ENCODE measurements at regions of chr9 and their contacts with region 1.

Region 1: GRCh38 chr9:19493174-19493811 is 84.5 kb downstream of the ACER2 start:
- DNase-seq: peak; percentile 15
- ATAC-seq: peak; percentile 86
- H3K4me3 ChIP-seq: no peak overlapping the region
- H3K27ac ChIP-seq: no peak overlapping the region
- H3K4me1 ChIP-seq: no peaks in the 10 kb centered on the region
- H3K27me3 ChIP-seq: peaks cover 2 to 14% of the 10 kb centered on the region in 2 experiments; a peak in 2 of 5 replicates
- CTCF ChIP-seq: peak; percentile 82
- EP300 ChIP-seq: no peak
- POLR2A ChIP-seq: no peak
- RAD21 ChIP-seq: peak; percentile 58; the same call in 1 of the 2 replicates

Region 2: DNA sequence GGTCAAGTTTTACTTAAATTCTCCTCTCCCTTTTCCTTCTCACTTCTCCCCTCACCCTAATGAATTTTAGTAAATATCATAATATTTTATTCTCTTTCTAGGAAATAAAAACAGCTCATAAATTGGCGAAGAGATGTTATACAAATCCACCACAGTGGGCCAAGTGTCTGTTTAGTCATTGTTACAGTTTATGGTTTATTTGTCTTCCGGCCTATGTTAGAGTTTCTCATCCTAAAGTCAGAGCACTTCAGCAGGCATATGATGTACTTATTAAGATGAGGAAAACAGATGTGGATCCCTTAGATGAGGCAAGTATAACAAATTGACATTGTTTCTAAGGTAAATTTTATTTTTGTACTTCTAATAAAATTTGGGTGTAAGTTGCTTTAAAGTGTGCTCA is 161.4 kb before region 1 on chr9:
- CTCF ChIA-PET with region 1: no interaction called
- POLR2A ChIA-PET with region 1: no interaction called
- in situ Hi-C with region 1: no loop called
- intact Hi-C with region 1: no loop called
- DNase-seq: no peak
- ATAC-seq: no peak
- H3K4me3 ChIP-seq: no peak overlapping the region
- H3K27ac ChIP-seq: no peak overlapping the region
- H3K4me1 ChIP-seq: no peaks in the 10 kb centered on the region; the same call in 1 of the 2 replicates
- H3K27me3 ChIP-seq: no peaks in the 10 kb centered on the region
- CTCF ChIP-seq: no peak
- EP300 ChIP-seq: no peak
- POLR2A ChIP-seq: no peak
- RAD21 ChIP-seq: no peak

Region 3: DNA sequence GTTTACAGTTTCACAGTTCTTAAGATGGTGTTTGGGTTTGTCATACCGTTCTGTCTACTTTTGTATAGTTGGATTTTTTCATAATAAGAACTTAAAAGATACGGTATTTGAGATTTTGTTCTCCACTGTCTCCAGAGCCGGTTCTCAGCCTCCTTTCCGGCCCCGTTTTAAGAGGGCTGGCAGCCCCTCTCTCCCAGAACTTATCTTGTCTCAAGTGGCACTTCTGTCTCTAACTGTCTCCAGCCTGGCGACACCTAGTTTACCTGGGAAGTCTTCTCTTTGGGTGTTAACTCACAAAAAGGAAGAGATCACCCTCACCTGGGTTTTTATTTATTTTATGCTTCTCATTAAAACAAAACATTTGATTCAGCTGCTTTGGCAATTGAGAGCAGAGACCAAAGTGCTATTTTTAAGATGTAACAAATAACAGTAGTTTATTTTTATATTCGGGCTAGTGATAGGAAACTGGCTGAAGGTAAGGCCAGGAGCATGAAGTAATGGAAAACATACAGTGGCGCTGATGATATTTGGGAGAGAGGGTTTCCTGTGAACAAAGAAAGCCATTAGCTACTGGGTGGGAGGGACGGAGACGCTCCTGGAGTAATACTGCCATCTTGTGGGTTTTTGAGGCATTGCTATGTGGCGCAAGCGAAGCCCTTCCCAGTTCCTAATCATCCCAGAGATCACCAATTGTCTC is 36.1 kb before region 1 on chr9:
- CTCF ChIA-PET with region 1: no interaction called
- POLR2A ChIA-PET with region 1: no interaction called
- in situ Hi-C with region 1: no loop called
- intact Hi-C with region 1: no loop called
- DNase-seq: peak; percentile 66
- ATAC-seq: peak; percentile 95
- H3K4me3 ChIP-seq: peak overlapping the region in 2 of 3 experiments; percentile 30; a peak in 2 of 6 replicates
- H3K27ac ChIP-seq: no peak overlapping the region
- H3K4me1 ChIP-seq: peaks cover 5% of the 10 kb centered on the region; the same call in 1 of the 2 replicates
- H3K27me3 ChIP-seq: no peaks in the 10 kb centered on the region
- CTCF ChIP-seq: peak; percentile 92
- EP300 ChIP-seq: no peak
- POLR2A ChIP-seq: no peak
- RAD21 ChIP-seq: peak; percentile 91

Region 4: GRCh38 chr9:19513671-19514275 is 20.5 kb after region 1 on chr9:
- CTCF ChIA-PET with region 1: no interaction called
- POLR2A ChIA-PET with region 1: no interaction called
- in situ Hi-C with region 1: no loop called
- intact Hi-C with region 1: no loop called
- DNase-seq: no peak
- ATAC-seq: no peak
- H3K4me3 ChIP-seq: peak overlapping the region; percentile 26 to 40 (median 37); a peak in 4 of 6 replicates
- H3K27ac ChIP-seq: no peak overlapping the region
- H3K4me1 ChIP-seq: peaks cover 11% of the 10 kb centered on the region
- H3K27me3 ChIP-seq: peaks cover 0 to 4% of the 10 kb centered on the region in 2 experiments; a peak in 1 of 5 replicates
- CTCF ChIP-seq: no peak
- EP300 ChIP-seq: no peak
- POLR2A ChIP-seq: no peak
- RAD21 ChIP-seq: no peak

Region 5: DNA sequence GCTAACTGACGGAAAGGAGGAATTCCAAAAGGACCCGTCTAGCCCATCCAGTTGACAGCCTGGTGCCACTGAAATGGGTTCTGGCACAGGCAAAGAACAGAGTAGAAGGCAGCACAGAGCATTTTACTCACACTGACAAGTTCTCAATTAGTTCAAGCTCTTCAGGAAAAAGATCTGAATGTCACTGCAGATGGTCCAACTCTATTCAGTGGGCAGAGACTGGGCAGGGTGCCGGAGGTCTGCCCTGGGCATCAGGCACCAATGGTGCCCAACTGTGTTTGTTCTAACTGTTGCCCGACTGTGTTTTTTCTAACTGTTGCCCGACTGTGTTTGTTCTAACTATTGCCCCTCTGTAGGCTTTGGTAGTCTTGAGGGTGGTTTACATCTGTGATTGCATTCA is 143.8 kb after region 1 on chr9:
- CTCF ChIA-PET with region 1: no interaction called
- POLR2A ChIA-PET with region 1: no interaction called
- in situ Hi-C with region 1: no loop called
- intact Hi-C with region 1: loop called (anchors 5 kb)
- DNase-seq: no peak
- ATAC-seq: no peak
- H3K4me3 ChIP-seq: no peak overlapping the region
- H3K27ac ChIP-seq: no peak overlapping the region
- H3K4me1 ChIP-seq: no peaks in the 10 kb centered on the region
- H3K27me3 ChIP-seq: no peaks in the 10 kb centered on the region
- CTCF ChIP-seq: no peak
- EP300 ChIP-seq: no peak
- POLR2A ChIP-seq: no peak
- RAD21 ChIP-seq: no peak

Measured in HepG2 (cell line).